Left lung (tissue), 14 donors: ENCODE measurements at regions of chr3 and their contacts with region 1.

Region 1: DNA sequence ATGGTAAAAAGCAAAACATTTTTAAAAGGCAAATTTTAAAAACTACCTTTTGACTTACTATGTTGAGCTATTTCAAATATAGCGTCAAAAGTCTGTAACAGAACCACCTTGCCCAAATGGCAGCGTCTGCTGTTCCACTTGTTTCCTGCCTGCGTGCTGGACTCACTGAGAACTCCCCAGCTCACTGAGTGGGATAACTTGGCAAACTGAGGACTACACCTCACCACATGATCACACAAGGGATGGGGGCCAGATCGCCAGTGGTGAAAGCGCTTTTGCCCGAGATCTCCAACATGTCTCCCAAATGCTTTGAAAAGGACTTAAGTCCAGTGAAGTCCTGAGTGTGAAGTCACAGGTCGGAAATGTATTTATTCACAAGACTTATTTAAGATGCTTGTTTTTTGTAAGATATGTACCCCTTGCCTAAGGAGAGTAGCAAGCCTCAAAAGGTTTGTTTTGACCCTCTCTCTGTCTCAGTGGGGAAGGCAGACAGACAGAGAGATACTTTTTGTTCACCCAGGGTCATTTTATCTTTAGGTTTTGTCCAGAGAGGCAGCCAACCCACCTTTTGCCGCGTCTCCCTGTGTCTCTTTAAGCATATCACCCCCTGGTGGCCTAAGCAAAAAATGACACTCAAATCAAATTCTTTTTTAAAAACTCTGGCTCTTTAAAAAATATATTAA is 192.6 kb downstream of the PDZRN3 start:
- DNase-seq: peak in 1 of 4 donors; percentile 63
- ATAC-seq: peak; percentile 56
- H3K4me3 ChIP-seq: no peak overlapping the region
- H3K27ac ChIP-seq: no peak overlapping the region
- H3K4me1 ChIP-seq: no peaks in the 10 kb centered on the region
- H3K27me3 ChIP-seq: peaks cover 0 to 14% of the 10 kb centered on the region in 2 donors
- CTCF ChIP-seq: peak; percentile 37

Region 2: GRCh38 chr3:73100741-73101559 is 331.2 kb before region 1 on chr3:
- intact Hi-C with region 1: loop called in 1 of 2 experiments (anchors 5 kb)
- DNase-seq: peak in 3 of 4 donors; percentile 67 to 90 (median 82)
- ATAC-seq: peak; percentile 98
- H3K4me3 ChIP-seq: no peak overlapping the region
- H3K27ac ChIP-seq: no peak overlapping the region
- H3K4me1 ChIP-seq: no peaks in the 10 kb centered on the region
- H3K27me3 ChIP-seq: no peaks in the 10 kb centered on the region
- CTCF ChIP-seq: peak; percentile 92 to 95

Region 3: DNA sequence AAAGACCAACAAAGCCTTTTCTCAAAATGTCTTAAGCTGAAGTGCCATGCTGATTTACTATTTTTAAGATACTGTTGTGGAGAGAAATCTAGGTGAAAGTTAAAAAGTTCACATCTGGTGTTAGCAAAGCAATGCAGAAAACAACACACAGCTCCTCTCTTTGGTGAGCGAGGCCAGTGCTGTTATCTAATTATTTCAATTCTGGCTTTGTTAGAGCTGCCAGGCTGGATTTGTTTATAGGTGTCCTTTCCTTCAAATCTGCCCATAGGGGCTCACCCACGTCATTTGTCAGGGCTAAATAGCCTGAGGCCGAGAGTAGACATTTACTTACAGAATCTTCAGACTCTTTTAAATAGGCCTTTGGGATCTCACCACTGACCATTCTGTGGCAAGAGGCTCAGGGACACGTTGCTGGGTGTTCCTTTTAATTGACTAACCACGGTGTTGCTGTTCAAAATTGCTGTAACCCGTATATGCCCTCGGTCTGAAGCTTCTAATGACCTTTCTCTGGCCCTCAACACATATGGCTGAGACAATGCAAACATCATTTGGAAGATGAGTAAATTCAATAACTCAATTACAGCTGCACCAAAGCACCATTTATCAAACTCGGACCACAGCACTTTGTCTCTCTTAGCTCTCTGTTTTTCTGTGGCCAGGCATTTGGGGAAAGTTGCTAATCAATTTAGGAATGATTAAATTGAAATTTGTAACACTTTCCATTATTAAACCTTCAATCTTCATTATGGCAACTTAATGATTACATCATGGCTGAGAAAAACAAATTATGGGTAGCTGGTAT is 40.0 kb after region 1 on chr3:
- intact Hi-C with region 1: no loop called
- DNase-seq: no peak
- ATAC-seq: no peak
- H3K4me3 ChIP-seq: no peak overlapping the region
- H3K27ac ChIP-seq: no peak overlapping the region
- H3K4me1 ChIP-seq: no peaks in the 10 kb centered on the region
- H3K27me3 ChIP-seq: no peaks in the 10 kb centered on the region
- CTCF ChIP-seq: no peak